Stomach (tissue), 19 donors: ENCODE measurements at regions of chr12 and their contacts with region 1.

Region 1: DNA sequence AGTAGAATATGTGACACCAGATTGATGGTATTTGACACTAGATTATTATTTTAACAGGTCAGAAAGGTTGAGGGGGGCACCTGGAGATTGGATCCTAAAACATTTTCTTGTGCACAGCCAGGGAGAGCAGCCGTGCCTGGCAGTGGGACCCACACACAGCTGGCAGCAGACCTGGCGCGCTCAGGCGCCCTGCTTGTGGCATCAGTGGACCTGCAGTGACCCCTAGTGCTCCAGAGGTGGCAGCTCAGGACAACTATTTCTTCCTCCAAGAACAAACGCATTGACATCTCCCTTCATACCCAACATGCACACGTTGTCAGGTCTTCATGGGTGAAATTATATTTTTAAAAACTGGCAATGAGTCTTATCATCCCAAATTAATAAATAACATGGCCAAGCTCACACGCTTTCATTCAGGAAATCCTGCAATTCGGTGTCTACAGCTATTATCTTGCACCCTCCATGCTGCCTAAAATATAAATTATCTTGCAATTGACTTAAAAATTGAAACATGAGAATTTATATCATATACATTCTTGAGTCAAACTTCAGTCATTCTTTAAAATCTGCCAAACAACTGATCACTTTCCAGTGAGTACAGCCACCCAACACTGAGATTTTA is 7.7 kb upstream of the TMEM132D start:
- DNase-seq: peak; percentile 63 to 82
- H3K4me3 ChIP-seq: no peak overlapping the region
- H3K27ac ChIP-seq: no peak overlapping the region
- H3K4me1 ChIP-seq: peaks cover 0 to 5% (median 0%) of the 10 kb centered on the region in 4 donors
- H3K27me3 ChIP-seq: peaks cover 0 to 30% (median 0%) of the 10 kb centered on the region in 3 donors
- CTCF ChIP-seq: peak in 5 of 7 experiments; percentile 46 to 78 (median 58)
- EP300 ChIP-seq: no peak
- POLR2A ChIP-seq: no peak

Region 2: GRCh38 chr12:128783129-128783574 is 1128.4 kb before region 1 on chr12:
- intact Hi-C with region 1: loop called (anchors 5 kb)
- DNase-seq: no peak
- H3K4me3 ChIP-seq: no peak overlapping the region
- H3K27ac ChIP-seq: no peak overlapping the region
- H3K4me1 ChIP-seq: no peaks in the 10 kb centered on the region
- H3K27me3 ChIP-seq: no peaks in the 10 kb centered on the region
- CTCF ChIP-seq: no peak
- EP300 ChIP-seq: no peak
- POLR2A ChIP-seq: no peak

Region 3: GRCh38 chr12:128969480-128970055 is 942.0 kb before region 1 on chr12:
- intact Hi-C with region 1: loop called (anchors 5 kb)
- DNase-seq: peak; percentile 34 to 71
- H3K4me3 ChIP-seq: no peak overlapping the region
- H3K27ac ChIP-seq: no peak overlapping the region
- H3K4me1 ChIP-seq: peaks cover 0 to 9% (median 4%) of the 10 kb centered on the region in 4 donors
- H3K27me3 ChIP-seq: peaks cover 0 to 68% (median 43%) of the 10 kb centered on the region in 3 donors
- CTCF ChIP-seq: peak in 3 of 7 experiments; percentile 13 to 18 (median 16)
- EP300 ChIP-seq: no peak
- POLR2A ChIP-seq: no peak